ENCODE measurements at regions of chr20 and their contacts with region 1.

Region 1: GRCh38 chr20:6636209-6637159 is 131.0 kb upstream of the BMP2 start:
- DNase-seq: peak; percentile 63
- ATAC-seq: peak; percentile 96
- H3K4me3 ChIP-seq: no peak overlapping the region
- H3K27ac ChIP-seq: no peak overlapping the region
- H3K4me1 ChIP-seq: no peaks in the 10 kb centered on the region
- H3K27me3 ChIP-seq: no peaks in the 10 kb centered on the region
- CTCF ChIP-seq: peak; percentile 80
- EP300 ChIP-seq: no peak
- POLR2A ChIP-seq: no peak
- RAD21 ChIP-seq: peak; percentile 57; the same call in 1 of the 2 replicates

Region 2: GRCh38 chr20:6685181-6685582 is 48.7 kb after region 1 on chr20:
- CTCF ChIA-PET with region 1: no interaction called
- POLR2A ChIA-PET with region 1: no interaction called
- in situ Hi-C with region 1: no loop called
- intact Hi-C with region 1: no loop called
- DNase-seq: no peak
- ATAC-seq: no peak
- H3K4me3 ChIP-seq: no peak overlapping the region
- H3K27ac ChIP-seq: no peak overlapping the region
- H3K4me1 ChIP-seq: 0 out of 2 replicates have a peak, but pooled peaks cover under 1% of the 10 kb centered on the region
- H3K27me3 ChIP-seq: no peaks in the 10 kb centered on the region
- CTCF ChIP-seq: no peak
- EP300 ChIP-seq: no peak
- POLR2A ChIP-seq: no peak
- RAD21 ChIP-seq: no peak

Region 3: GRCh38 chr20:6704132-6704861 is 67.8 kb after region 1 on chr20:
- CTCF ChIA-PET with region 1: no interaction called
- POLR2A ChIA-PET with region 1: no interaction called
- in situ Hi-C with region 1: no loop called
- intact Hi-C with region 1: loop called (anchors 5 kb)
- DNase-seq: peak; percentile 85
- ATAC-seq: peak; percentile 92
- H3K4me3 ChIP-seq: peak overlapping the region in 1 of 3 experiments; percentile 5; a peak in 2 of 6 replicates
- H3K27ac ChIP-seq: peak overlapping the region; percentile 12
- H3K4me1 ChIP-seq: peaks cover 57% of the 10 kb centered on the region
- H3K27me3 ChIP-seq: no peaks in the 10 kb centered on the region
- CTCF ChIP-seq: no peak
- EP300 ChIP-seq: peak in 1 of 2 experiments; percentile 83; a peak in 2 of 4 replicates
- POLR2A ChIP-seq: peak in 1 of 2 experiments; percentile 63; a peak in 1 of 4 replicates
- RAD21 ChIP-seq: no peak

Region 4: GRCh38 chr20:6819605-6820004 is 183.1 kb after region 1 on chr20:
- CTCF ChIA-PET with region 1: interaction called, 6 read pairs
- POLR2A ChIA-PET with region 1: no interaction called
- in situ Hi-C with region 1: no loop called
- intact Hi-C with region 1: loop called (anchors 1 kb)
- DNase-seq: peak; percentile 15
- ATAC-seq: peak; percentile 81
- H3K4me3 ChIP-seq: no peak overlapping the region
- H3K27ac ChIP-seq: no peak overlapping the region
- H3K4me1 ChIP-seq: no peaks in the 10 kb centered on the region
- H3K27me3 ChIP-seq: no peaks in the 10 kb centered on the region
- CTCF ChIP-seq: peak; percentile 46
- EP300 ChIP-seq: no peak
- POLR2A ChIP-seq: no peak
- RAD21 ChIP-seq: no peak

Measured in HepG2 (cell line).